Head of caudate nucleus (tissue), 42 donors: ENCODE measurements at regions of chr4 and their contacts with region 1.

Region 1: GRCh38 chr4:17544205-17544604 is 29.2 kb downstream of the CLRN2 start:
- DNase-seq: peak; percentile 61 to 97 (median 90)

Region 2: DNA sequence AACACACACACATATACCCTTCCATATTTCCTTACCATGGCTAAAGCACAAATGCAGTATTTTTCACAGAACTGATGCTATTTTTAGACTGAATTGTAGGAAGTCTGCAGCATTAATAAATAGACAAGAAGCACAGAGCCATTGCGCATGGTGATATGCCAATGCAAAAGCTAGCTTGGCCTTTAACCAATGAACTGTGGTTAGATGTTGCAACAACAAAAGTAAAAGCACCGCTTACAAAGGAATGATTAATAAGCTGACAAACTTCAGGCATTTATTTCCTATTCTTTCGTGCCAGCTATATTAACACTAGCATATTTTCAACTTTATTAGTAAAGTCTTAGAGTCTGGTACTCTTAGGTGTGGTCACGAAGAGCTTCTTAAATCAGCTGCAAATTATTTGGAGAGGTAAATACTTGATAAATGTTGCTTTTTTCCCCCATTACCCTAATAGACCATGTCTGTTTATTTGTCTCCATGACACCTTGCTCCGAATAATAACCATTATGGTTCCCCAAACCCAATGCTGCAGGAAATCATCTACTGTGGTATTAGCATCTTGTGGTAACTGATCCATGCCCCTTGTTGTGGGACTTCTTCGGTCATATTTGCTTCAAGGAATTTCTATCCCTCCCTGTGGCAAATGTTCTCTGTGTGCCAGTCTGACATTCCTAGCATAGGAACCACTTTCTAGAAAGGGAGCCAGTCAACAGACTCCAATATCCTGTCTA is 1011.8 kb before region 1 on chr4:
- intact Hi-C with region 1: no loop called
- DNase-seq: no peak

Region 3: GRCh38 chr4:17511950-17512795 is 32.0 kb before region 1 on chr4 and contains the start of gene QDPR:
- intact Hi-C with region 1: loop called (anchors 1 kb)
- DNase-seq: peak; percentile 74 to 97 (median 92)

Region 4: GRCh38 chr4:17636696-17637622 is 92.8 kb after region 1 on chr4:
- intact Hi-C with region 1: loop called (anchors 5 kb)
- DNase-seq: peak; percentile 66 to 96 (median 86)

Region 5: DNA sequence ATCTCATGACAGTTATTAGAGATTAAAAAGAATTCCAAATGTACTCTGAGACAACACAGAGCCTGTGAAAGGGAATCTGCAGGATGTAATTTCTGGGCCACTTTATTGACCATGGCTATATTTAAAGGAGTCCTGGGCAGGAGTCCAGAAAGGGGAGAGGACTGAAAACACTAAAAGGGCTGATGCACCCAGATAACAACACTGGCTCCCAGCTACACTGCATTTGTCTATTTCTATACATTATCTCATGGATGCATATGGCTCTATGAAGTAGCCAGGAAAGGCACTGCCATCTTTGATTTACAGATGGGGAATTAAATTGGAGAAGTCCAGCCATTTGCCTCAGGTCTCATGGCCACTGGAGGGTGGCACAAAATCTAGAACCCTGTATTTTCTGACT is 126.2 kb after region 1 on chr4:
- intact Hi-C with region 1: no loop called
- DNase-seq: no peak